ENCODE measurements at regions of chr19 and their contacts with region 1.

Region 1: GRCh38 chr19:39397360-39398296 is 6.5 kb downstream of the MED29 start:
- DNase-seq: peak; percentile 96
- H3K4me3 Mint-ChIP-seq: peak overlapping the region; percentile 3
- H3K27ac Mint-ChIP-seq: peak overlapping the region; percentile 85
- H3K4me1 Mint-ChIP-seq: peaks cover 57% of the 10 kb centered on the region
- H3K27me3 Mint-ChIP-seq: no peaks in the 10 kb centered on the region

Region 2: DNA sequence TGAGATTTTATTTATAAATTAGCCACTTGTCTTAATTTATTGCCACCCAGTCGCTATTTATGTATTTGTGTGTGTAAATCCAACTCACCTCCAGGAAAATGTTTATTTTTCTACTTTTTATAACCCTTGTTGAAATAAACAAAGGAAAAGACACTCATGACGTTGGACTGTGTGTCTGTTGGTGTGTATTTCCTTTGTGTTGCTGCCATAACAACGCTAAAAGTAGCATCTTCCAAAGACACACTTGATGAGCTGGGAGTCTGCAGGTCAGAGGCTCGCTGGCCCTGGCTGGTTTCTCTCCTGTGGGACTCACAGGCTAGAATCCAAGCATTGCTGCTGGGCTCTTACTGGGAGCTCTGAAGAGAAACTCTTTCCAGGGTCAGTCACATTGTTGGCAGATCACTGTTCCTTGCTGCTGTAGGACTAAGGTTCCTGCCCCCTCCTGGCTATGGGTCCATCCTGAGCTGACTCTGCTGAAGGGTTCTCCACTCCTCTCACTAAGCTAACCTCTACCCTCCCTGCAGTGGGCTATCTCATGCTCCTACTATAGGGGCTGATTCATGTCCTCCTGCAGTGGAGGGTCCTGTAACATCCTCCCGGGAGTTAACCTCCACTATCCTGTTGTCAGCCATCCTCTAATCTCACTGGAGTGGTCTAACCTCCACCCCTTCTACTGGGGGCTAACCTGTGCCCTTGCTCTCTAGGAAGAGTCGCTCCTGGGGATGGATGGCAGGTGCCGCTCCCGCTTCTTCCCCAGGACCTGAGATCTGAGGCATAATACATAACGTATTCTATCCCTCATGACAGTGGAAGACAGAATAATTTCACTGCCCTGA is 127.4 kb before region 1 on chr19:
- CTCF ChIA-PET with region 1: no interaction called
- POLR2A ChIA-PET with region 1: no interaction called
- intact Hi-C with region 1: no loop called
- DNase-seq: no peak
- H3K4me3 Mint-ChIP-seq: no peak overlapping the region
- H3K27ac Mint-ChIP-seq: no peak overlapping the region
- H3K4me1 Mint-ChIP-seq: no peaks in the 10 kb centered on the region
- H3K27me3 Mint-ChIP-seq: peaks cover 4% of the 10 kb centered on the region

Region 3: GRCh38 chr19:39282021-39282420 is 115.6 kb before region 1 on chr19:
- CTCF ChIA-PET with region 1: no interaction called
- POLR2A ChIA-PET with region 1: no interaction called
- intact Hi-C with region 1: no loop called
- DNase-seq: no peak
- H3K4me3 Mint-ChIP-seq: no peak overlapping the region
- H3K27ac Mint-ChIP-seq: no peak overlapping the region
- H3K4me1 Mint-ChIP-seq: no peaks in the 10 kb centered on the region
- H3K27me3 Mint-ChIP-seq: peaks cover 8% of the 10 kb centered on the region

Region 4: GRCh38 chr19:39341719-39342604 is 55.7 kb before region 1 on chr19 and contains the start of gene SAMD4B:
- CTCF ChIA-PET with region 1: interaction called, 11 read pairs
- POLR2A ChIA-PET with region 1: interaction called, 4 read pairs
- intact Hi-C with region 1: no loop called
- DNase-seq: peak; percentile 100
- H3K4me3 Mint-ChIP-seq: peak within 1 kb of the TSS; percentile 98
- H3K27ac Mint-ChIP-seq: peak within 1 kb of the TSS; percentile 91
- H3K4me1 Mint-ChIP-seq: peaks cover 65% of the 10 kb centered on the region
- H3K27me3 Mint-ChIP-seq: no peaks in the 10 kb centered on the region
- total RNA-seq, gene SAMD4B: 49.4 to 51.3 TPM